Transverse colon (tissue), 4 donors: ENCODE measurements at regions of chr1 and their contacts with region 1.

Region 1: DNA sequence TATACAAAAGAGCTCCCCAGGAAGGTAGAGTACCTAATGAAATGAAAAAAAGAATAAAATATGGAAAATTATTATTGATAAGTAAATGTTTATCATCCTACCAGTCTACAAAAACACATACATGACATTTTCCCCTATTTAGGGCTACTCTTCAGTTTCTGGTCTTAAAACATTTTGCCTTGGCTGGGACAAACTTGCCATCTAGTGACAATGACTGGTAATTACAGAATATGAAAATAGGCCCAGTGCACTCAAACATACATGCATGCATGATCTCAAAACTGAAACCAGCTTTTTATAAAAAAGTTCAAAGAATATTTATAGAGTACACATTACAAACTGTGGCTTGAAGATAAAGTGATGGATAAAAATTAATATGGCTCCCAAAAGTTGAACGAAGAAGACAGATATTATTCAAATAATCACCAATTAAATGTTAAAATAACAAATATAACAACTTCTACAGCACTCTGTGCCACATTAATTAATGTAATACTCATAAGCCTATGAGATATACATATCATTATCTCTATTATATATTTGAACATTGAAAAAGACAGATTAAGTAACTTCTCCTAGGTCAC is 10.5 kb upstream of the RNPC3 start:
- DNase-seq: no peak
- H3K4me3 ChIP-seq: no peak overlapping the region
- H3K27ac ChIP-seq: no peak overlapping the region
- H3K4me1 ChIP-seq: no peaks in the 10 kb centered on the region
- H3K27me3 ChIP-seq: no peaks in the 10 kb centered on the region
- CTCF ChIP-seq: peak; percentile 57 to 68 (median 63)
- EP300 ChIP-seq: no peak
- POLR2A ChIP-seq: no peak

Region 2: DNA sequence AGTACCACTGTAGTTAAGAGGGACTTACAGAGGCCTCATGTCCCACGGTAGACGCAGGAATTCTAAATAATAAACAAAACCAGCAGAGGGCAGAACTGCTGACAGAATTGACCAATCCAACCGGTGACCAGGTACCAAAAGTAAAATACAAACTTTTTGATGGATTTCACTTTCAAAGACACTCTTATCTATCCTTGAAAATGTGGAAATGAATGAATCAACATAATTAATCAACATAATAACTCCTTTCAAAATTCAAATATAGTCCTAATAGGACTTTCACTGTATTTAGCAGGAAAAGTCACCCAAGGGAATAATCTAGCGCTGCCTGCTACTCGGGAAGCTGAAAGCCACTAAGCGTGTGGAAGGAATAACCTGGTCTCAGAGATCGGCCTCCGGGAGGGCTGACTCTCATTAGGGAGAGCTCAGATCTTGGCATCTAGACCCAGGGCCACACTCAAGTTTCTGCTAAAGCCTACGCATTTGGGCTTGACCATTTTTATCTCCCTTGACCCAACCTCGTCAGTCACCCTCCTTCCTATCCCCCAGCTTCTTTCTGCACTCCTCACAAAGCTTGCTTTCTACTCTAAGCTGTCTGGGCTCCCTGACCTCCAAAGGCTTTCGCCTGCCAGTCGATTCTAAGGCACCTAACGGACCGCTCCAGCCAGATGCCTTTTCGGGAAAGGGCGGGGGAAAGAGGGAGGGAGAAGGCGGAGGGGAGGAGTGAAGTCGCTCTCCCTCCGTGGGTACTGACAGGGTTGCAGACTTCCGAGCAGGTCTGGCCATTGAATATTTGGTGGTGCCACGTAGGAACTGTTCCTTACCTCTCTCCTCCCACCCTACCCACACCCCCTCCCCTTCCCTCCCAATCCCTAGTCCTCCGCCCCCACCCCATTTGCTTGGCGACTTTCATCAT is 408.3 kb before region 1 on chr1:
- in situ Hi-C with region 1: loop called in 1 of 4 experiments (anchors 10 kb)
- intact Hi-C with region 1: loop called (anchors 10 kb)
- DNase-seq: no peak
- H3K4me3 ChIP-seq: peak overlapping the region; percentile 12 to 39 (median 16)
- H3K27ac ChIP-seq: no peak overlapping the region
- H3K4me1 ChIP-seq: peaks cover 0 to 20% (median 13%) of the 10 kb centered on the region in 4 donors
- H3K27me3 ChIP-seq: peaks cover 29% of the 10 kb centered on the region
- CTCF ChIP-seq: peak; percentile 20 to 44 (median 37)
- EP300 ChIP-seq: no peak
- POLR2A ChIP-seq: no peak